Gastrocnemius medialis (tissue), 4 donors: ENCODE measurements at regions of chr21 and their contacts with region 1.

Region 1: GRCh38 chr21:43929217-43930025 is 64.4 kb downstream of the AGPAT3 start:
- DNase-seq: peak; percentile 91 to 96
- ATAC-seq: peak; percentile 67 to 69
- H3K4me3 ChIP-seq: peak overlapping the region in 3 of 4 donors; percentile 25 to 29 (median 29)
- H3K27ac ChIP-seq: peak overlapping the region; percentile 94 to 98 (median 96)
- H3K4me1 ChIP-seq: peaks cover 50 to 81% of the 10 kb centered on the region in 2 donors
- H3K27me3 ChIP-seq: no peaks in the 10 kb centered on the region
- CTCF ChIP-seq: peak; percentile 41 to 58 (median 48)
- POLR2A ChIP-seq: peak; percentile 37 to 51

Region 2: GRCh38 chr21:43949499-43950208 is 20.2 kb after region 1 on chr21:
- in situ Hi-C with region 1: no loop called
- intact Hi-C with region 1: loop called (anchors 1 kb)
- DNase-seq: no peak
- ATAC-seq: no peak
- H3K4me3 ChIP-seq: no peak overlapping the region
- H3K27ac ChIP-seq: peak overlapping the region in 2 of 4 donors; percentile 16 to 19
- H3K4me1 ChIP-seq: peaks cover 23% of the 10 kb centered on the region in 2 donors
- H3K27me3 ChIP-seq: no peaks in the 10 kb centered on the region
- CTCF ChIP-seq: no peak
- POLR2A ChIP-seq: no peak

Region 3: GRCh38 chr21:44730951-44731579 is 801.6 kb after region 1 on chr21:
- in situ Hi-C with region 1: no loop called
- intact Hi-C with region 1: no loop called
- DNase-seq: no peak
- ATAC-seq: no peak
- H3K4me3 ChIP-seq: no peak overlapping the region
- H3K27ac ChIP-seq: no peak overlapping the region
- H3K4me1 ChIP-seq: no peaks in the 10 kb centered on the region
- H3K27me3 ChIP-seq: peaks cover 13 to 19% (median 16%) of the 10 kb centered on the region in 3 donors
- CTCF ChIP-seq: no peak
- POLR2A ChIP-seq: no peak